ENCODE measurements at regions of chr5 and their contacts with region 1.

Region 1: DNA sequence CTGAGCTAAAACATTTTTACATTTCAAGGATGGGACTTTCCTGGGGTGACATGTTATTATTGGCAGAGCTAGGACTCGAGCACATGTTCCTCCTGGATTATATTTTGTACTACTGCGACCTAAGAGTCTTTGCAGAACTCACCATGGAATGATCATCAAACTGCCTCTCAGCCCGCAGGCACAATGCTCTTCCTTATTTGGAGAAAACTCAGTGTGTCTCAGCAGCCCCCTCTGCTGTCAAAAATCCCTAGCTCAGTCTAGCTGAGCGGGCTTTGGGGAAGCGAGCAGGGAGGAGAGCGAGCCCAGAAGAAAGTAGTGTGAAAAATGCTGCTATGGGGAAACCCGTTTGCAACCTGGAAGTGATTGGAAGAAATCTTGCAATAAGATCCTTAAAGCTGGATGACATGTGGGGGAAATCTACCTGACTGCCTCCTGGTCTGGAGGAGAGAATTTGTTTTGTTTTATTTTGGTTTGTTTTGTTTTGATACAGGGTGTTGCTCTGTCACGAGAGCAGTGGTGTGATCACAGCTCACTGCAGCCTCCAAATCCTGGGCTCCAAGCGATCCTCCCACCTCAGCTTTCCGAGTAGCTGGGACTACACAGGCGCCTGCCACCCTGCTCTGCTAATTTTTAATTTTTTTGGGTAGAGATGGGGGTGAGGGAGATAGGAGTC is 89.9 kb upstream of the CLINT1 start:
- DNase-seq: peak; percentile 62 to 85 (median 77)
- ATAC-seq: peak; percentile 95
- H3K4me3 ChIP-seq: no peak overlapping the region
- H3K4me3 Mint-ChIP-seq: peak overlapping the region; percentile 0
- H3K27ac ChIP-seq: no peak overlapping the region
- H3K27ac Mint-ChIP-seq: no peak overlapping the region
- H3K4me1 ChIP-seq: no peaks in the 10 kb centered on the region
- H3K4me1 Mint-ChIP-seq: peaks cover 5% of the 10 kb centered on the region
- H3K27me3 ChIP-seq: no peaks in the 10 kb centered on the region
- H3K27me3 Mint-ChIP-seq: peaks cover 11% of the 10 kb centered on the region
- CTCF ChIP-seq: peak; percentile 67

Region 2: DNA sequence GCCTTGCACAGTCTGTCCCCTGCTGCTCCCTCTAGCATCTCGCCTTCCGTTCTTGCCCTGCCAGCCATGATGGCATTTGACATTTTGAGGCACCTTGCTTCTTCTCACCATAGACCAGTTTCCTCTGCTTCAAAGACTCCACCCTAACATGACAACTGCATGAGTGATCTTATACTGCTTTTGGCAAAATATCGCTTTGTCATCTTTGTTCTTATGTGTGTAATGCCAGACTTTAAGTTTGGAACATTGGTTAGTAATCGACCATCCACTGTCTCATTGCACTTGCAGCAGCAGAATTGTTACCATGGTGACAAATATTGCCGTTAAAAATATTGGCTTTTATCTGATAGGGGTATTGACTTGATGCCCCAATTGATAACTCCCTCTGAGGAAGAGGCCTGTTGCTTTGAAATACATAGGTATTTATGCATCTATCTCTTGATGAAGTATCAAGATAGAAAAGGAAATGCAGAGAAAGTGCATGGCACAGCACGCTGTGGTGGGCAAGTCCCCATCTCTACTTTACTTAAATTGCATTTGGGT is 789.6 kb before region 1 on chr5:
- CTCF ChIA-PET with region 1: no interaction called
- POLR2A ChIA-PET with region 1: no interaction called
- intact Hi-C with region 1: no loop called
- DNase-seq: peak in 6 of 9 experiments; percentile 29 to 72 (median 53)
- ATAC-seq: peak; percentile 81
- H3K4me3 ChIP-seq: no peak overlapping the region
- H3K4me3 Mint-ChIP-seq: peak overlapping the region; percentile 13
- H3K27ac ChIP-seq: peak overlapping the region; percentile 23 to 78
- H3K27ac Mint-ChIP-seq: peak overlapping the region; percentile 58
- H3K4me1 ChIP-seq: peaks cover 38% of the 10 kb centered on the region
- H3K4me1 Mint-ChIP-seq: peaks cover 62% of the 10 kb centered on the region
- H3K27me3 ChIP-seq: no peaks in the 10 kb centered on the region
- H3K27me3 Mint-ChIP-seq: no peaks in the 10 kb centered on the region
- CTCF ChIP-seq: no peak

Region 3: DNA sequence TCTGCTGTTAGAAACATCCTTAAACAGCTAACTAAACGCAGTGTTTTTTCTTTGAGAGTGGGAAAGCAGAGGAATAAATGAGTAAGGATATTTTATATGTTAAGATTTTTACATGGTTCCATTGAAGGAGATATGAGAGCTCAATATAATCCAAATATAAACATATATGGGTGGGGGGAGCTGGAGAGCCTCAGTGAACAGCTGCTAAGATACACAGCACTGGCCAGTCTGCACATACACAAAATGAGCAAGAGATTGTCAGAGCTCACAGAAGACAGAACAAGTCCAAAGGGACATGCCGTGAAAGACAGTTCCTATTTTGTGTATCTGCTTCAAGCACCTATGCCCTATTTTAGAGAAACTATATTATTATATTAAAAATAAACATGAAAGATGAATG is 136.8 kb before region 1 on chr5:
- CTCF ChIA-PET with region 1: interaction called, 64 read pairs
- POLR2A ChIA-PET with region 1: no interaction called
- intact Hi-C with region 1: loop called (anchors 1 kb)
- DNase-seq: no peak
- ATAC-seq: no peak
- H3K4me3 ChIP-seq: no peak overlapping the region
- H3K4me3 Mint-ChIP-seq: no peak overlapping the region
- H3K27ac ChIP-seq: no peak overlapping the region
- H3K27ac Mint-ChIP-seq: no peak overlapping the region
- H3K4me1 ChIP-seq: no peaks in the 10 kb centered on the region
- H3K4me1 Mint-ChIP-seq: peaks cover 2% of the 10 kb centered on the region
- H3K27me3 ChIP-seq: no peaks in the 10 kb centered on the region
- H3K27me3 Mint-ChIP-seq: no peaks in the 10 kb centered on the region
- CTCF ChIP-seq: no peak

Region 4: DNA sequence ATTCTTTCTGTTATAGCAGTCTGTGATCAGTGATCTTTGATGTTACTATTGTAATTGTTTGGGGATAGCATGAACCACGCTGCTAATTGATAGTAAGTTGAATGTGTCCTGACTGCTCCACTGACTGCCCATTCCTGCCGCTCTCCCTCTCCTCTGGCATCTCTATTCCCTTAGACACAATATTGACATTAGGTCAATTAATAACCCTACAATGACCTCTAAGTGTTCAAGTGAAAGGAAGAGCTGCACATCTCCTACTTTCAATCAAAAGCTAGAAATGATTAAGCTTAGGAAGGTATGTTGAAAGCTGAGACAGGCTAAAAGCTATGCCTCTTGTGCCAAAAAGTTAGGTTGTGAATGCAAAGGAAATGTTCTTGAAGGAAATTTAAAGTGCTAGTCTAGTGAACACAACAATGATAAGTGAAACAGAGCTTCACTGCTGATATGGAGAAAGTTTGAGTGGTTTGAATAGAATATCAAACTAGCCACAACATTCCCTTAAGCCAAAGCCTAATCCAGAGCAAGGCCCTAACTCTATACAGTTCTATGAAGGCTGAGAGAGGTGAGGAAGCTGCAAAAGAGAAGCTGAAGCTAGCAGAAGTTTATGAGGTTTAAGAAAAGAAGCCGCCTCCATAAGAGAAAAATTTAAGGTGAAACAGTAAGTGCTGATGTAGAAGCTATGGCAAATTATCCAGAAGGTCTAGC is 102.8 kb before region 1 on chr5:
- CTCF ChIA-PET with region 1: interaction called, 12 read pairs
- POLR2A ChIA-PET with region 1: no interaction called
- intact Hi-C with region 1: no loop called
- DNase-seq: no peak
- ATAC-seq: no peak
- H3K4me3 ChIP-seq: no peak overlapping the region
- H3K4me3 Mint-ChIP-seq: no peak overlapping the region
- H3K27ac ChIP-seq: no peak overlapping the region
- H3K27ac Mint-ChIP-seq: no peak overlapping the region
- H3K4me1 ChIP-seq: no peaks in the 10 kb centered on the region
- H3K4me1 Mint-ChIP-seq: peaks cover 43% of the 10 kb centered on the region
- H3K27me3 ChIP-seq: no peaks in the 10 kb centered on the region
- H3K27me3 Mint-ChIP-seq: no peaks in the 10 kb centered on the region
- CTCF ChIP-seq: no peak

Region 5: GRCh38 chr5:157934600-157934999 is 14.3 kb before region 1 on chr5:
- CTCF ChIA-PET with region 1: interaction called, 22 read pairs
- POLR2A ChIA-PET with region 1: no interaction called
- intact Hi-C with region 1: no loop called
- DNase-seq: no peak
- ATAC-seq: no peak
- H3K4me3 ChIP-seq: no peak overlapping the region
- H3K4me3 Mint-ChIP-seq: no peak overlapping the region
- H3K27ac ChIP-seq: no peak overlapping the region
- H3K27ac Mint-ChIP-seq: no peak overlapping the region
- H3K4me1 ChIP-seq: no peaks in the 10 kb centered on the region
- H3K4me1 Mint-ChIP-seq: no peaks in the 10 kb centered on the region
- H3K27me3 ChIP-seq: no peaks in the 10 kb centered on the region
- H3K27me3 Mint-ChIP-seq: no peaks in the 10 kb centered on the region
- CTCF ChIP-seq: no peak

Region 6: GRCh38 chr5:158026304-158027031 is 77.6 kb after region 1 on chr5:
- CTCF ChIA-PET with region 1: no interaction called
- POLR2A ChIA-PET with region 1: no interaction called
- intact Hi-C with region 1: no loop called
- DNase-seq: no peak
- ATAC-seq: no peak
- H3K4me3 ChIP-seq: no peak overlapping the region
- H3K4me3 Mint-ChIP-seq: no peak overlapping the region
- H3K27ac ChIP-seq: no peak overlapping the region
- H3K27ac Mint-ChIP-seq: no peak overlapping the region
- H3K4me1 ChIP-seq: no peaks in the 10 kb centered on the region
- H3K4me1 Mint-ChIP-seq: no peaks in the 10 kb centered on the region
- H3K27me3 ChIP-seq: no peaks in the 10 kb centered on the region
- H3K27me3 Mint-ChIP-seq: peaks cover 12% of the 10 kb centered on the region
- CTCF ChIP-seq: no peak

Region 7: GRCh38 chr5:158174918-158175851 is 226.3 kb after region 1 on chr5:
- CTCF ChIA-PET with region 1: no interaction called
- POLR2A ChIA-PET with region 1: no interaction called
- intact Hi-C with region 1: no loop called
- DNase-seq: peak; percentile 10 to 66 (median 46)
- ATAC-seq: peak; percentile 44
- H3K4me3 ChIP-seq: no peak overlapping the region
- H3K4me3 Mint-ChIP-seq: no peak overlapping the region
- H3K27ac ChIP-seq: no peak overlapping the region
- H3K27ac Mint-ChIP-seq: no peak overlapping the region
- H3K4me1 ChIP-seq: no peaks in the 10 kb centered on the region
- H3K4me1 Mint-ChIP-seq: peaks cover 3% of the 10 kb centered on the region
- H3K27me3 ChIP-seq: no peaks in the 10 kb centered on the region
- H3K27me3 Mint-ChIP-seq: no peaks in the 10 kb centered on the region
- CTCF ChIP-seq: peak; percentile 56